BJ (cell line): ENCODE measurements at regions of chr10 and their contacts with region 1.

Region 1: DNA sequence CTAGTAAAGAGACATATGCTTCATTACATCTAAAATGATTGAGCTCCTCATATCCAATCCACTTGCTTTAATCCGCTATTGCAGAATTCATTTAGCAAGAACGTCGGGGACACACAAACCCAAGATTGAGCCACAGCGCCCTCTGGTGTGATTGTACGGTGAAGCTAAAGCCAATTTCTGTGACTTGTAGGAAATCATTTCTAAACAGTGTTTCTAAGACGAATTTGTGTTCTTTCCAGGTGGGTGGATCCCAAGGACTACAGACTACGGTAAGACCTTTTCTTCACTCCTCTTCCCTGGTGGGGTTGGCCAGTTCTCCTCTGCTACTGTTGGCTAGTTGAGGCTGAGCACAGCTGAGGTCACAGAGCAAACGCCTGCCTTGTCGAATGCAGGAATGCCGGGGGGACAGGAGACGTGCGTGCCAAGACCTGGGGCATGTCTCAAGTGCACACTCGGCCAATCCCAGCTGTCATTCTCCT is 5.2 kb downstream of the DMBT1 start:
- DNase-seq: peak; percentile 24
- H3K4me3 ChIP-seq: no peak overlapping the region
- H3K27me3 ChIP-seq: peaks cover 7% of the 10 kb centered on the region; the same call in 1 of the 2 replicates
- CTCF ChIP-seq: peak; percentile 89

Region 2: DNA sequence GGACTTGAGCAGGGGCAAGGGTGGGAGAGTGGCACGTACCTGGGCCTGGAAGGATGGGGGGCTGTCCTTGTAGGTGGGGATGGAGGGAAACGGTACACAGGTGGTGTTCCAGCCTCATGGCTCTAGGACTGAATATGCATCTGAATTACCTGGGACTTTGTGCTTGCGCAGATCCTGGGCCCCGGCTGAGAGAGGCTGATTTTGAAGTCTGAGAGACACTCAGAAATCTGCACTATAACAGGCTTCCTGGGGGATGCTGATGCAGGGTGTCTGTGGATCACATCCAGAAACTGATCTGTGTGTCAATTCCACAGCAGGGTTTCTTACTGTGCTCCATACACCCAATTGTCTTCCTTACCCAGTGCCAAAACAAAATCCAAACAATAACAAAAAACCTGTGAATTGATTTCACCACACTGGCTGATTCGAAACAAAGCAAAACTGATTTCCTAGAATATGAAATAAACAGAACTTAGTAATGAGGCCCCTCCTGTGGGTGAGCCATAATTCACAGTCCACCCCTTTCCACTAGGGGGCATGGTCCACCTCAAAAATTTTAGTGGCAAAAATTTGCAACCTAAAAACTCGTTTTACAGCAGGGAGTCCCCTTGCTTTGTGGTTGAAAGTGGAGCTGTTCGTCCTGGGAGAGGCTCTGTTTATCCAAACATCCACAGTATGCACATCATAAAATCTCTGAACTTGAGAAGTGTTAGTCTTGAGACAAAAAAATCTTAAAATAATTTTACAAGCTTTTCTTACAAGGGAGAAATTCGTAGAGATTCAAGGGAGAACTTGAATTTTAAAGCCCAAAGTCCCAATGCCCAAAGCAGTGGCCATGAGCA is 223.3 kb before region 1 on chr10:
- CTCF ChIA-PET with region 1: interaction called, 34 read pairs
- POLR2A ChIA-PET with region 1: no interaction called
- DNase-seq: peak; percentile 49
- H3K4me3 ChIP-seq: no peak overlapping the region
- H3K27me3 ChIP-seq: no peaks in the 10 kb centered on the region
- CTCF ChIP-seq: peak; percentile 83

Region 3: GRCh38 chr10:122478971-122479370 is 86.8 kb before region 1 on chr10:
- CTCF ChIA-PET with region 1: no interaction called
- POLR2A ChIA-PET with region 1: no interaction called
- DNase-seq: no peak
- H3K4me3 ChIP-seq: no peak overlapping the region
- H3K27me3 ChIP-seq: no peaks in the 10 kb centered on the region
- CTCF ChIP-seq: no peak

Region 4: GRCh38 chr10:122504610-122504950 is 61.2 kb before region 1 on chr10:
- CTCF ChIA-PET with region 1: interaction called, 10 read pairs
- POLR2A ChIA-PET with region 1: no interaction called
- DNase-seq: peak; percentile 51
- H3K4me3 ChIP-seq: no peak overlapping the region
- H3K27me3 ChIP-seq: no peaks in the 10 kb centered on the region
- CTCF ChIP-seq: no peak

Region 5: DNA sequence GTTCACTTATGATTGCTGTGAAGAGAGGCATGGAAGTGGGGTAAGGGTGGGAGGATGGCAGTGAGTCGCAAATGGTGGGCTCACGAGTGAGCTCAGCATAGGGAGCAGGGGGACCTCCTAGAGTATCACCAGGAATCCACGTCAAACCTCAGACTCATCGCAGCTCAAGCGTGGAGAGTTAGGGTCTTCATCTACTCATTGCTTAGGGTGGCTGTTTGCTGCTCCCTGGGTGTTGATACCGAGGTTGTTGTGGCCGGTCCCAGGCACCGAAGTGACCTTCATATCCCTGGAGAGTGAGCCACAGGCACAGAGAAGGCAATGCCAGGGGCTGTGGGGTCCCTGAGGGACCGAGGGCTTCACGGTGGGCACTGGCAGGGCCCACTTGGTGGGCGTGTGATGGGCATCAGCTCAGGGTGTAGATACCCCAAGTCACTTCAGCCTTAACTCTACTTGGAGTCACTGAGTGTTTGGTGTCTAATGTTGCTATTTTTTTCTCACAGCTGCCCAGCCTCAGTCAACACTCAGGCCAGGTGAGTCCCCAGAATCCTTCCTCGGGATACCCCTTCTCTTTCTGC is 11.6 kb after region 1 on chr10:
- CTCF ChIA-PET with region 1: interaction called, 13 read pairs
- POLR2A ChIA-PET with region 1: no interaction called
- DNase-seq: no peak
- H3K4me3 ChIP-seq: no peak overlapping the region
- H3K27me3 ChIP-seq: no peaks in the 10 kb centered on the region
- CTCF ChIP-seq: no peak

Region 6: GRCh38 chr10:122674781-122675180 is 109.0 kb after region 1 on chr10:
- CTCF ChIA-PET with region 1: no interaction called
- POLR2A ChIA-PET with region 1: no interaction called
- DNase-seq: no peak
- H3K4me3 ChIP-seq: no peak overlapping the region
- H3K27me3 ChIP-seq: no peaks in the 10 kb centered on the region
- CTCF ChIP-seq: no peak

Region 7: DNA sequence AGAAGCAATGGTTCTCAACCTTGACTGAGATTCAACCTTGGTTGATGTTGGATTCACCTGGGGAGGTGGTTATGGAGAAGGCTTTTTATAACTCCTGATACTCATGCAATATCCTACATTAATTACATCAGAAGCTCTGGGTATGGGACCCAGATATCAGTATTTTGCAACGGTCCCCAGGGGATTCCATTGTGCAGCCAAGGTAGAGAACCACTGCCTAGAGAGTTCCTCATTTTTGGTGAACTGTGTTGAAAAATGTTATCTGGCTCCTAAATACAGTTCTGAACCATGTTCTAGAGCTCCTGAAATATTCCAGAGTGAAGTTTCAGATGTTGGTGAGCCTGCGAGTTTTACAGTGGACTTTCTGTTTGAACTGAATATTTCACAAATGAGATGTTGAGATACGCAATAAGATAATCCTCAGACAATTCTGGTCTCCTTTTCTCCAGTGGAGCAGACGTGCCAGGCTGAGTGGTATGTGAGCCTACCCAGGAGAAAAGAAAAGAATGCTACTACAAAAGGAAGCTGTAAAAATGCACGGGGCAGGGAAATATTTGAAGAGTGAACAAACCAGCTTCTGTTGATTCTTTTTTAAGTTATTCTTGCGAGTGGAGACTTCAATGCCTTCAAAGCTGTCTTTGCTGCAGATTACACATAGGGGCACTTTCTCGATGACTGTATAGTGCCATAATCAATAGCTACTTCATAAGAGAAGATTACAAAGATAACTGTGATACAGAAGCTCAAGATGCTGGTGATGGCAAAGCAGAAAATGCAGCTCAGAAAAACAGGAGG is 147.5 kb after region 1 on chr10:
- CTCF ChIA-PET with region 1: no interaction called
- POLR2A ChIA-PET with region 1: no interaction called
- DNase-seq: no peak
- H3K4me3 ChIP-seq: no peak overlapping the region
- H3K27me3 ChIP-seq: no peaks in the 10 kb centered on the region
- CTCF ChIP-seq: no peak